Calu3 (cell line): ENCODE measurements at regions of chr5 and their contacts with region 1.

Region 1: GRCh38 chr5:33180900-33181299 is 259.9 kb upstream of the TARS1 start:
- DNase-seq: peak; percentile 2
- H3K4me3 Mint-ChIP-seq: no peak overlapping the region
- H3K27ac Mint-ChIP-seq: no peak overlapping the region
- H3K4me1 Mint-ChIP-seq: peaks cover 8% of the 10 kb centered on the region
- H3K27me3 Mint-ChIP-seq: no peaks in the 10 kb centered on the region
- CTCF ChIP-seq: no peak

Region 2: DNA sequence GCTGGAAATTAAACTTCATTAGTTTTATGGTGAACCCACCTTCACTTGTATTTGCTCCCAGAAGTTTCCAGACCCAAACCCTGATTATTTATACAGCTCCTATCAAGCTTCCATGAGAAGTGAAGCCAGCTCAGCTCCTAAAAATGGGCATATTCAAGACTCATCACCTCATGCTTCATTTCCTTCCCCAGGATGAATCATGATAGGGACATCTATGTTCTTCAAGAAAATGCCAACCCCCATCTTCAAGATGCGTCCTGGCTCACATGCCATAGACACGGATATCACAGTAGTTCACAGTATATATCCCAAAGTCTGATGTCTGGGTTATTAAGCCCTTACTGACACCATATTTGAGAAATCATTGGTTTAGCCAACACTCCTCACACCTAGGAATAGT is 252.1 kb before region 1 on chr5:
- CTCF ChIA-PET with region 1: no interaction called
- intact Hi-C with region 1: loop called (anchors 10 kb)
- DNase-seq: no peak
- H3K4me3 Mint-ChIP-seq: no peak overlapping the region
- H3K27ac Mint-ChIP-seq: no peak overlapping the region
- H3K4me1 Mint-ChIP-seq: no peaks in the 10 kb centered on the region
- H3K27me3 Mint-ChIP-seq: no peaks in the 10 kb centered on the region
- CTCF ChIP-seq: no peak

Region 3: DNA sequence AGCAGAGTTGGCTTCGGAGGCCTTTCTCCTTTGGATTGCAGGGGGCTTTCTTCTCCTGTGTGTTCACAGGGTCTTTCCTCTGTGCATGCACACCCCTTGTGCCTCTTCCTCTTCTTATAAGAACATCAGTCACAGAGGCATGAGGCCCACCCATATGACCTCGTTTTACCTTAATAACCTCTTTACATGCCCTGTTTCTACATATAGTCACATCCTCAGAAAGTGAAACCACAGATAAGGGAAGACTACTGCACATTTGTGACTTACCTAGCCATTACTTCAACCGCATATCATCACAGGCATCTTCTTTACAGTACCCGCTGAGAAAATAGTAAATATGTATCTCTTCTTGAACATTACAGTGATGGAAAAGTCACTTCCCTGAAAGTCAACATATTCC is 54.9 kb after region 1 on chr5:
- CTCF ChIA-PET with region 1: no interaction called
- intact Hi-C with region 1: no loop called
- DNase-seq: no peak
- H3K4me3 Mint-ChIP-seq: no peak overlapping the region
- H3K27ac Mint-ChIP-seq: no peak overlapping the region
- H3K4me1 Mint-ChIP-seq: no peaks in the 10 kb centered on the region
- H3K27me3 Mint-ChIP-seq: no peaks in the 10 kb centered on the region
- CTCF ChIP-seq: no peak

Region 4: GRCh38 chr5:33423018-33423630 is 242.2 kb after region 1 on chr5:
- CTCF ChIA-PET with region 1: no interaction called
- intact Hi-C with region 1: loop called (anchors 5 kb)
- DNase-seq: no peak
- H3K4me3 Mint-ChIP-seq: no peak overlapping the region
- H3K27ac Mint-ChIP-seq: no peak overlapping the region
- H3K4me1 Mint-ChIP-seq: no peaks in the 10 kb centered on the region
- H3K27me3 Mint-ChIP-seq: peaks cover 15% of the 10 kb centered on the region
- CTCF ChIP-seq: peak; percentile 17